CD8-positive, alpha-beta T cell (primary cell): ENCODE measurements at regions of chr1 and their contacts with region 1.

Region 1: DNA sequence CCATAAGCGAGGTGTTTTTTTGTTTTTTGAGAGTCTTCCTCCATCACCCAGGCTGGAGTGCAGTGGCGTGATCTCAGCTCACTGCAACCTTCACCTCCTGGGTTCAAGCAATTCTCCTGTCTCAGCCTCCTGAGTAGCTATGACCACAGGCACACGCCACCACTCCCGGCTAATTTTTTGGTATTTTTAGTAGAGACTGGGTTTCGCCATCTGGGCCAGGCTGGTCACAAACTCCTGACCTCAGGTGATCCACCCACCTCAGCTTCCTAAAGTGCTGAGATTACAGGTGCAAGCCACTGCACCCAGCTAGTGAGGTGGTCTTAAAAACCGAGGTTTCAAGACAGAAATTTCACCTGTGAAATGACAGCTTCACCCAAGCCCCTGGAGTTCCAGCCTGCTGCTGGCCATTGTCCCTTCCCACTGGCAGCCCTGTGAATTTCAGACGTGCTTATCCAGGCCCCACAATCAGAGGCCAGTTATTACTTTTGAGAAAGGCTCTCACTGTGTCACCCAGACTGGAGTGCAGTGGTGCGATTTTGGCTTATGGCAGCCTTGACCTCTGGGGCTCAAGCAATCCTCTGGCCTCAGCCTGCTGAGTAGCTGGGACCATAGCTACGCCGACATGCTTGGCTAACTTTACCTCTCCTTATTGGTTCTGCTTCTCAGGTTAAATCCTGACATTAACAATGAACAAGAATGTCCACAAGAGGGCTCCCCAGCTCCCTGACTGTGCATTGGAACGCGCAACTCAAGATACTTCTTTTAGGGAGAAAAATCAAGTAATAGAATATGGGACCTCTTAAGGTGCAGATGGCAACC is 19.4 kb downstream of the ENO1 start:
- DNase-seq: peak in 7 of 9 experiments; percentile 37 to 76 (median 59)
- ATAC-seq: peak; percentile 79
- H3K4me3 ChIP-seq: no peak overlapping the region
- H3K4me3 Mint-ChIP-seq: no peak overlapping the region
- H3K27ac ChIP-seq: peak overlapping the region in 1 of 2 experiments; percentile 31
- H3K27ac Mint-ChIP-seq: peak overlapping the region; percentile 77
- H3K4me1 ChIP-seq: no peaks in the 10 kb centered on the region
- H3K4me1 Mint-ChIP-seq: peaks cover 15% of the 10 kb centered on the region
- H3K27me3 ChIP-seq: no peaks in the 10 kb centered on the region
- H3K27me3 Mint-ChIP-seq: no peaks in the 10 kb centered on the region
- CTCF ChIP-seq: peak; percentile 65

Region 2: GRCh38 chr1:8873506-8874229 is 14.6 kb after region 1 on chr1:
- CTCF ChIA-PET with region 1: interaction called, 77 read pairs
- POLR2A ChIA-PET with region 1: interaction called, 16 read pairs
- intact Hi-C with region 1: no loop called
- DNase-seq: peak in 8 of 9 experiments; percentile 60 to 82 (median 72)
- ATAC-seq: peak; percentile 30
- H3K4me3 ChIP-seq: no peak overlapping the region
- H3K4me3 Mint-ChIP-seq: peak overlapping the region; percentile 19
- H3K27ac ChIP-seq: peak overlapping the region in 1 of 2 experiments; percentile 99
- H3K27ac Mint-ChIP-seq: peak overlapping the region; percentile 78
- H3K4me1 ChIP-seq: peaks cover 48% of the 10 kb centered on the region
- H3K4me1 Mint-ChIP-seq: peaks cover 69% of the 10 kb centered on the region
- H3K27me3 ChIP-seq: no peaks in the 10 kb centered on the region
- H3K27me3 Mint-ChIP-seq: no peaks in the 10 kb centered on the region
- CTCF ChIP-seq: no peak

Region 3: DNA sequence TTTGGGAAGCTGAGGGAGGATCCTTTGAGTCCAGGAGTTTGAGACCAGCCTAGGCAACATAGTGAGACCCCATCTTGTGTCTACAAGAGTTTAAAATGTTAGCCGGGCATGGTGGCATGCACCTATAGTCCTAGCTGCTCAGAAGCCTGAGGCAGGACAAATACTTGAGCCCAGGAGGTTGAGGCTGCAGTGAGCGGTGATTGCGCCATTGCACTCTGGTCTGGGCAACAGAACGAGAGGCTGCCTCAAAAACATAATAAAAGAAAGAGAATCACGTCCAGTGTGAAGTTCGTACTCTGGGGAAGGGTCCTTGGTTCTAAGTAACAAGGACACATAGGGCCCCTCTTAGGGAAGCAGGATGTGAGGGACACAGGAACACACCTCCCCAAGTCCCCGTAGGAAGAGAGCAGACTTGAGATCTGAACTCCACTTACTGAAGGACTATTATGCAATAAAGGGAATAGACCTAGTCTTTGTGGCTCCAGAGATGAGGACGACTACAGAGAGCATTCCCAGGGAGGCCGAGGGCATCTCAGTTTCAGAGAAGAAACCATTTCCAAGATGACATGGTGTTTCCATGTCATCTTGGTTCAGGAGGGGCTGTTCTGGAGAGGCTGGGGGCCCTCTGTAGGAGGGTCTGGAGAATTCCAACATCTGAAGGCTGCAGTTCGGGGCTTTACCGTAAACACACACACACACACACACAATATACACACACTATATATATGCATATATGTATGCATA is 30.2 kb after region 1 on chr1:
- CTCF ChIA-PET with region 1: interaction called, 10 read pairs
- POLR2A ChIA-PET with region 1: no interaction called
- intact Hi-C with region 1: no loop called
- DNase-seq: no peak
- ATAC-seq: no peak
- H3K4me3 ChIP-seq: no peak overlapping the region
- H3K4me3 Mint-ChIP-seq: no peak overlapping the region
- H3K27ac ChIP-seq: no peak overlapping the region
- H3K27ac Mint-ChIP-seq: no peak overlapping the region
- H3K4me1 ChIP-seq: no peaks in the 10 kb centered on the region
- H3K4me1 Mint-ChIP-seq: no peaks in the 10 kb centered on the region
- H3K27me3 ChIP-seq: no peaks in the 10 kb centered on the region
- H3K27me3 Mint-ChIP-seq: no peaks in the 10 kb centered on the region
- CTCF ChIP-seq: no peak